ENCODE measurements at regions of chr1 and their contacts with region 1.

Region 1: DNA sequence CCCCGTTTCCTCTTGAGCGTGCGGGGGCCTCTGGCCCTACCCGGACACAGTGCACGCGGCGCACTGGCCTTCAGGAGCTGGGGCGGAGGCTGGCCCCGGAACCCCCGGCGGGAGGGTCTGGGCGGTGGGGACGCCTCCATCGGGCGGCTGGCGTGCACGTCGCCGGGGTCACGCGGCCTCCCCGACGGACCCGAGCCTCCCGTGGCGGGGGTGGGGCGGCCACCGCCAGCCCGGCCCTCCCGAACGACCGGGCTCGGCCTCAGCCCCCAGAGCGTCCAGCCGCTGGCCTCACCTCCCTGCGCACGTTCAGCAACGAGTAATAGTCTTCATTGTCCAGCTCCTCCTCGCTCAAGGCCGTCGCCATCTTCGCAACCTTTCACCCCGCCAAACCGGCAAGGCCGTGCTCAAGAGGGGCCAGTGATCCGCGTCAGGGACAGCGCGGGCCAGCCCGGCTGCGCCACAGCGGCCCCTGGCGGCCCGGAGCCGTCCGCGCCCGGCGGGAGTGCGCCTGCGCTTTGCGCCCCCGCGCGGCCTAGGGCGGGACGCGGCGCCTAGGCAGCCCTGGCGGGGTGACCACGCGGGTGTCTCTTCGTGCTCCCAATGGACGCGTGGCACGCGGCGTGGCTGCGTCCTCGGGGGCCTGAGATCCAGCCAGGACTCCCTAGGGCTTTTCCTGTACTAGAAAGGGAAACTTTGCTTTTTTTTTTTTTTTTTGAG is at the start of gene DNAJC11:
- DNase-seq: peak; percentile 87
- ATAC-seq: peak; percentile 99
- H3K4me3 ChIP-seq: peak within 1 kb of the TSS; percentile 77
- H3K27ac ChIP-seq: peak within 1 kb of the TSS; percentile 76
- H3K4me1 ChIP-seq: peaks cover 5% of the 10 kb centered on the region; the same call in 1 of the 2 replicates
- H3K27me3 ChIP-seq: 0 out of 2 replicates have a peak, but pooled peaks cover 1% of the 10 kb centered on the region
- CTCF ChIP-seq: peak; percentile 99; the same call in 1 of the 2 replicates
- POLR2A ChIP-seq: peak; percentile 82
- RAD21 ChIP-seq: no peak; the same call in 1 of the 2 replicates
- total RNA-seq, gene DNAJC11: 38.7 and 41.7 TPM in 2 replicates

Region 2: DNA sequence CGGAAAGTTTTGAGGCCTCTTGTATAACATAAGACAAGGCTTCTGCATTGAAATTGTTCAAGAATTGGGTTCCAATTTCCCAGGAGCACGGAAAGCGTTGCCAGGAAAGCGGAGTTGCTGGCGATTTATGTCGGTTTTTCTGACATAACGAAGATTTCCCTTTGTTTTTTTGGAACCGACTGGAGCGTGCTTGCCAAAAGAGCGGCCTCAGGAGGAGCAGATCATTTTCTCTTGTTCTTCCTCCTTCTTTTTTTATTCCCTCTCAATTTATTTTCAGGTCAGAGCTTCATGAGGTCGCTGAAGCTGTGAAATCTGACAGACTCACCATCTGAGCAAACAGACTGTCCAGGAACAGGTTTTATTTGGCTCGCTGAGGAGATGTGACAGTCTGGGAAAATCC is 359.1 kb after region 1 on chr1:
- CTCF ChIA-PET with region 1: no interaction called
- POLR2A ChIA-PET with region 1: no interaction called
- dilution Hi-C with region 1: no loop called
- in situ Hi-C with region 1: no loop called
- intact Hi-C with region 1: no loop called
- DNase-seq: no peak
- ATAC-seq: no peak
- H3K4me3 ChIP-seq: no peak overlapping the region
- H3K27ac ChIP-seq: no peak overlapping the region
- H3K4me1 ChIP-seq: no peaks in the 10 kb centered on the region
- H3K27me3 ChIP-seq: peaks cover 29% of the 10 kb centered on the region
- CTCF ChIP-seq: no peak
- POLR2A ChIP-seq: no peak
- RAD21 ChIP-seq: no peak

Region 3: DNA sequence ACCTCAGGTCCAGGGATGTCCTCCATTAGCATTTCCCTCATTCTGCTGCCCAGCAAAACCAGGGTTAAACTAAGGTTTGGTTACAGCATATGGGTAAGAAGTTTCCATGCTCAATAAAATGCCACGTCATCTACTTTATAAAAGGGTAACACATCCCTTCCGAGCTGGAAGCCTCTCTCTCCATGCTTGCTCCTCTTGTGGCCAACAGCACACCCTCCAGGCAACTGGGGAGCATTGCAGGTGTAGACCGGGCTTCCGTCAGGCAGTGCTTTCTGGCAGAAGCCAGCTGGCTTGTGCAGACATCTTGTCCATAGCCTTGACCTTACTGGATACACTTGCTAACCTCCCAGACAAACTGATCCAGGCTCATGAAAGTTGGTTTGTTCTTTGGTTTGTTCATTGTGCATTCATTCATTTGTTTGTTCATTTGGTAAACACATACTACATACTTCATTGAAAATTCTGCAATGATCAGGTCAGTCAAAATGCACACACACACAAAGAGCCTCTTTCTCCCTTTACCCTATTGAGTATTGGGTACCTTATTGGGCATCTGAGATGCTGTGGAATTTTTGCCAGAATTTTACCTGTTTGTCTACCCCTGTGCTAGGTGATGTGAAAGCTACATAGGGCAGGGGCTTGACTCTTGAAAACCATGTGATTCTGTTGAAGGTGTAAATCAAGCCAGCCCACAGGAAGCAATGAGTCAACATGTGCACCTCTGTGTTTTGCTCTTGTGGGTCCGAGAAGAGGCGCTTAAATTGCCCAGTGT is 506.5 kb after region 1 on chr1:
- CTCF ChIA-PET with region 1: no interaction called
- POLR2A ChIA-PET with region 1: no interaction called
- dilution Hi-C with region 1: no loop called
- in situ Hi-C with region 1: loop called (anchors 25 kb)
- intact Hi-C with region 1: no loop called
- DNase-seq: peak; percentile 73
- ATAC-seq: peak; percentile 89
- H3K4me3 ChIP-seq: no peak overlapping the region
- H3K27ac ChIP-seq: no peak overlapping the region
- H3K4me1 ChIP-seq: no peaks in the 10 kb centered on the region
- H3K27me3 ChIP-seq: no peaks in the 10 kb centered on the region
- CTCF ChIP-seq: peak; percentile 65
- POLR2A ChIP-seq: 0 out of 2 replicates have a peak, but pooled peaks have one; percentile 25
- RAD21 ChIP-seq: peak; percentile 86

Measured in IMR-90 (cell line).